GM12878 (cell line): ENCODE measurements at regions of chr7 and their contacts with region 1.

Region 1: GRCh38 chr7:87144173-87144657 is 8.0 kb upstream of the DMTF1 start:
- DNase-seq: peak; percentile 78
- ATAC-seq: peak; percentile 97
- H3K4me3 ChIP-seq: no peak overlapping the region
- H3K27ac ChIP-seq: peak overlapping the region; percentile 56
- H3K4me1 ChIP-seq: peaks cover 22% of the 10 kb centered on the region
- H3K27me3 ChIP-seq: no peaks in the 10 kb centered on the region
- CTCF ChIP-seq: no peak
- EP300 ChIP-seq: peak in 1 of 2 experiments; percentile 58; a peak in 1 of 4 replicates
- POLR2A ChIP-seq: no peak
- RAD21 ChIP-seq: no peak

Region 2: GRCh38 chr7:87059525-87060287 is 84.5 kb before region 1 on chr7 and contains the start of gene ELAPOR2:
- CTCF ChIA-PET with region 1: interaction called, 6 read pairs
- POLR2A ChIA-PET with region 1: no interaction called
- RAD21 ChIA-PET with region 1: no interaction called
- SMC1A ChIA-PET with region 1: no interaction called
- in situ Hi-C with region 1: loop called (anchors 5 kb)
- intact Hi-C with region 1: loop called (anchors 2 kb)
- DNase-seq: peak; percentile 8
- ATAC-seq: peak; percentile 97
- H3K4me3 ChIP-seq: peak within 1 kb of the TSS; percentile 78
- H3K27ac ChIP-seq: peak within 1 kb of the TSS; percentile 27; the same call in 1 of the 2 replicates
- H3K4me1 ChIP-seq: no peaks in the 10 kb centered on the region
- H3K27me3 ChIP-seq: no peaks in the 10 kb centered on the region; a peak in 1 of 4 replicates
- CTCF ChIP-seq: peak; percentile 49 to 61 (median 55)
- EP300 ChIP-seq: no peak
- POLR2A ChIP-seq: peak; percentile 78
- RAD21 ChIP-seq: peak; percentile 64
- polyA plus RNA-seq, gene ELAPOR2: 1.3 to 2.3 TPM